HEK293 (cell line): ENCODE measurements at regions of chr5 and their contacts with region 1.

Region 1: DNA sequence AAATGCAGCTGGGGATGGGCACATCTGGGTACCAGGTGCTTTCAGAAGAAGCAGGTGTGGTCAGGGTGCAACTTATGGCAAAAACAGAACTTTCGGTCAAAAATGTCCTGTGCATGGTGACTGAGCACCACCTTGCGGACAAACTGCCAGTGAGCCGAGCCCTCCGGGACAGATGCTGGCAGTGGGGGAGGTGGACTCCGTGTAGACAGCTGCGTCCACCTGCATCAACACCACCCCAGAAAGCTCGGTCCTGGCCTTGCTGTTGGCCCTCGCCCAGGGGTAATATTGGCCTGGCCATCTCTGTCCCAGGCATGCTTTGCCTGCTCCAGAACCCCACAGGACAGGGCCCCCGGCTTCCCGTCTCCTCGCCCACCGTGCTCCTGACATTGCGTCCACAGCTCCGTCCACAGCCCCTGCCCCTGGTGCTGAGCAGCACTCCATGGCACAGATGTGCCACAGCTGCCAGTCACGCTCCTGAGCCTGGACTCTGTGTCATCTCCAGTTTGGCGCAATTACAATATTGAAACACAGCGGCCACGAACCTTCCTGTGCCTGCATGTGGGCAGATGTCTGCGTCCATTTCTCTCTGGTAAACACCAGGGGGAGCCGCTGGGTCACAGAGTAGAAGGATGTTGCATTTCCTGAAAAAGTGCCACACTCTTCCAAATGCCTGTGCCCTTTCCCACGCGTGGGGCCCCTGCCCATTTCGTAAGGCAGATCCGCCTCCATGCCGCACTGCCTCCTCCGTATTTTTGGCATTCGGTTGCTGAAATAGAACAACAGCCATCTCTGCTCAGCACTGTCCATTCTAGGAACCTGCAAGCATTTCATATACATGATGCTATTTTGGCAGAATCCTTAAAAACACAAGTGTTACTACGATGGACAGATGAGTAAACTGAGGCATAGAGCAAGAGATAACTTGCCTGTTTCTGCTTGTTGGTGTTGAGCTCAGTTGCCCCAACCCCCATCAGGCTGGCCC is 33.4 kb upstream of the SLC6A19 start:
- H3K4me3 ChIP-seq: peak overlapping the region; percentile 29
- H3K27ac ChIP-seq: no peak overlapping the region
- H3K4me1 ChIP-seq: no peaks in the 10 kb centered on the region
- CTCF ChIP-seq: peak; percentile 61

Region 2: DNA sequence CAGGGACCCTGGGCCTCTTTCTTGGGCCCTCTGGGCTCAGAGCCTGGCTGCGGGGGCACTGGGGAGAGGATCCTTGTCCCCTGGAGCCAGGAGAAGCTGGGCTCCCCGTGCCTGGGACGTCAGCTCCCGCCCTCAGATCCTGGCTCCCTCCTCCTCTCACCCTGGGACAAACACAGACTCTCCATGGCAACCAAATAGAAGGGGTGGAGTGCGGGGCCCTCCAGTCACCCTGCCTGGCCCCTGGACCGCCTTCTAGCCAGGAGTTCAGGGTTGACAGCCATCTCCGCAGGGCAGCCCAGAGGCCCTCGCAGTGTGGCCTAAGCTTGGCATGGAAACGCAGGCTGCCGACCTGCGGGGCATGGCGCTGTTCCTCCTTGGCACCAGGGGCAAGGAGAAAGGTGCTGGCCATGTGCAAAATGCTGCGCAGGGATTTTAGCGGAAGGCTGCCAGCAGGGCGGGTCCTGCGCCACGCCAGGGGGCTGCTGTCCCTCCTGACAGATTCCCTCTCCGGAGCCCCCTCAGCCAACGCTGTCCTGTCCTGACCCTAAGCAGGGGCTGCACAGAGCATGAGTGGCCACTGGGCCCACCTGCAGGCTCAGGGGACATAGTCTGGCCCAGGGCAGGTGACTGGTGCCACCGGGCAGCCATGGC is 318.2 kb before region 1 on chr5:
- CTCF ChIA-PET with region 1: no interaction called
- POLR2A ChIA-PET with region 1: no interaction called
- H3K4me3 ChIP-seq: no peak overlapping the region
- H3K27ac ChIP-seq: no peak overlapping the region
- H3K4me1 ChIP-seq: no peaks in the 10 kb centered on the region
- CTCF ChIP-seq: no peak

Region 3: GRCh38 chr5:923281-923873 is 244.6 kb before region 1 on chr5:
- CTCF ChIA-PET with region 1: interaction called, 39 read pairs
- POLR2A ChIA-PET with region 1: no interaction called
- H3K4me3 ChIP-seq: no peak overlapping the region
- H3K27ac ChIP-seq: no peak overlapping the region
- H3K4me1 ChIP-seq: 0 out of 2 replicates have a peak, but pooled peaks cover 2% of the 10 kb centered on the region
- CTCF ChIP-seq: peak; percentile 95

Region 4: DNA sequence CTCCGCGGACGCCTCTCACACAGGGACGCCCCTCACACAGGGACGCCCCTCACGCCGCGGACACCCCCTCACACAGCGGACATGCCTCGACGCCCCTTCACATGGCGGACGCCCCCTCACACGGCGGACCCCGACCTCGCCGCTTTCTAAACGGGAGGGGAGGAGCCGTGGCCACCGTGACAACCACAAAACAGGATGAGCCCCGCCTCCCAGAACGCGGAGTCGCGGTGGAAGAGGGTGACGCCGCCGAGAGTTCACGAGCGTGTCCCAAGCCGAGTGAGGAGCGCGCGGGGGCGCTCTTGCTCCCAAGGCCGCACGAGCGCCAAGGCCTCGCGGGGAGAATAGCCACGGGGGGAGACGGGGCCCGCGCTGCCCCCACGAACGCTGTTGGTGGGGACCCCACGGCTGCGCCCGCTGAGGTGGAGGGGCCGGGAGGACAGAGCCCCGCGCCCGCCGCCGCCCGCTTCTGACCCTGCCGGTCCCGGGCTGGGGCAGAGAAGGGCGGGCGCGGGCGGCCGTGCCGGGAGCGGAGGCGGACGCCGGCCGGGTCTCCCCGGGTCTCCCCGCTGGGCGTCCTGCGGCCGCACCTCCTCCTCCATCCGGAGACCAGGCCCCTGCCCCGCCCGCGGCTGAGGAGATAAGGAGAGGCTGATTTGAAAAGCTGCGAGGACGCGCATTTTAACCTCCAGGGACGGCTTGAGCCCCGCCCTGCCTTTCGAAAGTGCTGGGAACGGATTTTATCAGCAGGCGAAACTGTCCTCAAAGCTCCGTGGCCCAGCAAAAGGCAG is 163.4 kb before region 1 on chr5:
- CTCF ChIA-PET with region 1: interaction called, 23 read pairs
- POLR2A ChIA-PET with region 1: no interaction called
- H3K4me3 ChIP-seq: peak overlapping the region; percentile 38
- H3K27ac ChIP-seq: peak overlapping the region; percentile 63; the same call in 1 of the 2 replicates
- H3K4me1 ChIP-seq: peaks cover 19% of the 10 kb centered on the region
- CTCF ChIP-seq: peak; percentile 90

Region 5: DNA sequence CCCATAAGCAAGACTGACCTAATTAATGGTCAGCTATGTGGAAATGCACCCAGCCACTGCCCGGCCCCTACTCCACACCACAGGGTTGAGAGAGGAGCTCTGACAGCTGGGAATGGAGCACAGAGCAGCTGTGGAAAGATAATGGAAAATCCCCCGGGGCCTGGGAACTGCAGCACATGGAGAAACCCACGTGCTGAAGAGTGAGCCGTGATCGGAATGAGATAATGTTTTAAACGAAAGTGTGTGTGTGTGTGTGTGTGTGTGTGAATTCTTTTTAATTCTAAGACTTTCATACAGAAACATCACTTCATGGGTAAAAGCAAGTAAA is 43.0 kb before region 1 on chr5:
- CTCF ChIA-PET with region 1: interaction called, 10 read pairs
- POLR2A ChIA-PET with region 1: no interaction called
- H3K4me3 ChIP-seq: no peak overlapping the region
- H3K27ac ChIP-seq: no peak overlapping the region
- H3K4me1 ChIP-seq: 0 out of 2 replicates have a peak, but pooled peaks cover 7% of the 10 kb centered on the region
- CTCF ChIP-seq: no peak

Region 6: GRCh38 chr5:1190837-1191239 is 22.8 kb after region 1 on chr5:
- CTCF ChIA-PET with region 1: interaction called, 14 read pairs
- POLR2A ChIA-PET with region 1: no interaction called
- H3K4me3 ChIP-seq: no peak overlapping the region
- H3K27ac ChIP-seq: no peak overlapping the region
- H3K4me1 ChIP-seq: no peaks in the 10 kb centered on the region
- CTCF ChIP-seq: no peak